ENCODE measurements at regions of chr22 and their contacts with region 1.

Region 1: GRCh38 chr22:25791556-25791955 is 49.6 kb downstream of the MYO18B start:
- DNase-seq: peak in 1 of 2 donors; percentile 70
- ATAC-seq: peak; percentile 50 to 78 (median 70)
- H3K4me3 ChIP-seq: no peak overlapping the region
- H3K27ac ChIP-seq: peak overlapping the region; percentile 62
- H3K4me1 ChIP-seq: peaks cover 18% of the 10 kb centered on the region
- H3K27me3 ChIP-seq: no peaks in the 10 kb centered on the region
- CTCF ChIP-seq: no peak

Region 2: DNA sequence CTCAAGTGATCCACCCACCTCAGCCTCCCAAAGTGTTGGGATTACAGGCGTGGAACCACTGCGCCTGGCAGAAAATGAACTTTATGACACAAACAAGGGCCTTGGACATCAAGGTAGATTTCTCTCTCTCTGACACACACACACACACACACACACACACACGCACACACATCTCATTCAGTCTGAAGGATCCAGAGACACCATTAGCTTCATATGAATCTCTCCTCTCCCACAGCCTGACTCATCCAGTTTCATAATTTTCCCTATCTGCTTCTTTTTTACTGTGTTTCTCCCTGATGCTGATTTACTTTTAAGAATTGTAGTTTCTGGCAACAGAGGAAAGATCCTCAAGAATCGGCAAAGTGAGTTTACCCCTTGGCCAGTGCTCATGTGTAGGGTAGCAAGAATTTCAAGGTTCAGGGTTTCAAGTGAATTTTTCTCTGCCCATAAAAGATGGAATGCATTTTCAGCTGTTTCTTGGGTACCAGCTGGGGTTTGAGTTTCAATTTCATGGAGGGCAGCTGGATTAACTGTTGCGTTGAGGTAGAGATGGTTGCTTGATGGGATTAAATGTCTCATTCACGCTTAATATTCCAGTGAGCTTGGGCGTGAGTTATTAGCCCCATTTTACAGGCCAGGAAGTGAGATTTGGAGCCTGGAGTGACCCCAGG is 46.1 kb before region 1 on chr22:
- intact Hi-C with region 1: no loop called
- DNase-seq: no peak
- ATAC-seq: no peak
- H3K4me3 ChIP-seq: peak overlapping the region; percentile 78
- H3K27ac ChIP-seq: peak overlapping the region; percentile 98
- H3K4me1 ChIP-seq: peaks cover 49% of the 10 kb centered on the region
- H3K27me3 ChIP-seq: no peaks in the 10 kb centered on the region
- CTCF ChIP-seq: no peak

Region 3: GRCh38 chr22:25840167-25840566 is 48.6 kb after region 1 on chr22:
- intact Hi-C with region 1: loop called in 1 of 2 experiments (anchors 5 kb)
- DNase-seq: no peak
- ATAC-seq: peak in 2 of 4 donors; percentile 9
- H3K4me3 ChIP-seq: no peak overlapping the region
- H3K27ac ChIP-seq: no peak overlapping the region
- H3K4me1 ChIP-seq: peaks cover 3% of the 10 kb centered on the region
- H3K27me3 ChIP-seq: no peaks in the 10 kb centered on the region
- CTCF ChIP-seq: no peak

Measured in psoas muscle (tissue), 8 donors.